ENCODE measurements at regions of chr13 and their contacts with region 1.

Region 1: DNA sequence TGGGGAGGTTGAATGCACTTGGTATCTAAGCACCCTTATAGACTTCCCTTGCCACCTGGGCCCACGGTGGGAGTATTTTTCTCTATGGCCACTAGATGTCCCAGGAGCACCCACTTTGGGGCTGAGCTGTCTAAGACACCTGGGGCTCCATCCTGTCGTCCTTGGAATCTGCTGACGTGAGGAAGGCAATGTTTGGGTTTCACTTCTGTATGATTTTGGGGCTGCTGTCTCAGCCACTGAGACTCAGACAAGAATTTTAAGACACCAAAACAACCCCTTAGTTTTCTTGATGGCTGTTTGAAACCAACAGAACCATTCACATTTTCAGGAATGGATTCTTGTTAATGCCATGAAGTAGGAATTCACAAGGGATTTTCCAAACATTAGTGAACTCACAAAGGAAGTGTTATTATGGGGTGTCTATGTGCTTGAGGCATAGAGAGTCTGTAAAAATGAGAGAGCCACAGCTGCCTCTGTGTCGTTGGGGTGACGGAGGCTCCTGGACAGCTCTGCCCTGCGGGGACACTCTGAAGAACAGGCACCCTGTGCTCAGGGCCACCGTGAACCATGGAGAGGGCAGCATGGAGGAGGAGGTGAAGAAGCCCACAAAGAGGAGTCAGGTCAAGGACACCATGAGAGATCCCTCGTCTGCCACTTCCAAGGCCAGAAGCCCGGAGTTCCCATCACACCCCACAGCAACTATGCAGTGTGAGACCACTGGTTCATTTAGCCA is 106.8 kb upstream of the SPATA13 start:
- DNase-seq: peak; percentile 55 to 78
- H3K4me3 ChIP-seq: no peak overlapping the region
- H3K27ac ChIP-seq: no peak overlapping the region
- H3K4me1 ChIP-seq: peaks cover 14% of the 10 kb centered on the region
- H3K27me3 ChIP-seq: no peaks in the 10 kb centered on the region
- CTCF ChIP-seq: peak; percentile 89

Region 2: GRCh38 chr13:24148399-24149305 is 95.0 kb after region 1 on chr13:
- CTCF ChIA-PET with region 1: no interaction called
- POLR2A ChIA-PET with region 1: no interaction called
- intact Hi-C with region 1: loop called (anchors 1 kb)
- DNase-seq: peak; percentile 81 to 99
- H3K4me3 ChIP-seq: peak overlapping the region; percentile 28; the same call in 1 of the 2 replicates
- H3K27ac ChIP-seq: peak overlapping the region; percentile 92
- H3K4me1 ChIP-seq: peaks cover 61% of the 10 kb centered on the region
- H3K27me3 ChIP-seq: no peaks in the 10 kb centered on the region
- CTCF ChIP-seq: peak; percentile 51; the same call in 1 of the 2 replicates

Region 3: GRCh38 chr13:24802074-24802473 is 748.4 kb after region 1 on chr13:
- CTCF ChIA-PET with region 1: no interaction called
- POLR2A ChIA-PET with region 1: no interaction called
- intact Hi-C with region 1: no loop called
- DNase-seq: peak; percentile 22 to 52
- H3K4me3 ChIP-seq: no peak overlapping the region
- H3K27ac ChIP-seq: no peak overlapping the region
- H3K4me1 ChIP-seq: peaks cover 9% of the 10 kb centered on the region
- H3K27me3 ChIP-seq: no peaks in the 10 kb centered on the region
- CTCF ChIP-seq: no peak